ENCODE measurements at regions of chr19 and their contacts with region 1.

Region 1: GRCh38 chr19:5622463-5623396 is at the starts of genes SAFB and SAFB2:
- DNase-seq: peak; percentile 97 to 100
- H3K4me3 ChIP-seq: peak within 1 kb of the TSS; percentile 86 to 96
- H3K27ac ChIP-seq: peak within 1 kb of the TSS; percentile 93 to 97
- H3K4me1 ChIP-seq: peaks cover 3 to 49% of the 10 kb centered on the region in 2 donors
- H3K27me3 ChIP-seq: no peaks in the 10 kb centered on the region
- CTCF ChIP-seq: peak in 2 of 3 experiments; percentile 6 to 9
- total RNA-seq, gene SAFB: 114 TPM
- total RNA-seq, gene SAFB2: 10.7 TPM

Region 2: DNA sequence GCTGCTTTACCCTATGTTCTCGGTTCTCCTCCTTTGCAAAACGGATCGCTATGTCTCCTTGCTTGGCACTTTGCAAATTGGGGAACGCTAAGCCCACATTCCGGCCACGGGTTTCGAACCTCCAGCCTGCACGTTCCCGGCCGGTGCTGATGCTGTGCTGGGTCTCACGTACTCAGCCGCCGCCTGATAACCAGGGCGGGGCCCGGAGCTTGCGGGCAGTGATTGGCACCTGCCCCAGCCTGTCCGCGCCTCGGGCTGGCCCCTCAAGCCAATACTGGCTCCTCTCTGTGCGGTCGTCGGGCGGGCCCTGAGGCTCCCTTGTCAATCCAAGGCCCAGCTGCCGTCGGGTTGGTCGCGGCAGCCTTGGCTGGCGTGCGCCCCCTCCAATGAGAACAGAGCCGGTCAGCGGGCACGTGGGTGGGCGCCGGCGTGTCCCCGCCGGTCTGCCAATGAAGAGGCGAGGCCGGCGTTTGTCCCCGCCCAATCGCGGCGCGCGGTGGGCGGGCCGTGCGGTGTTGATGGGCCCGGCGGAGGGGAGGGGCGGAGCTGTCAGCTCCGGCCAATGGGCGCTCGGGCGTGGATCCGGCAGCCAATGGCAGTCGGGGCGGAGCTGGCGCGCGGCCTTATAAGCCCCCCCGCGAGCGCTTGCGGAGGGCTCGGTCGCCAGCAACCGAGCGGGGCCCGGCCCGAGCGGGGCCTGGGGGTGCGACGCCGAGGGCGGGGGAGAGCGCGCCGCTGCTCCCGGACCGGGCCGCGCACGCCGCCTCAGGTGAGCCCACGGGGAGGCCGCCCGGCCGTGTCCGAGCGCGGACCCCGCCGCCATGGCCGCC is 654.1 kb before region 1 on chr19 and contains the start of gene KDM4B:
- intact Hi-C with region 1: loop called (anchors 5 kb)
- DNase-seq: peak; percentile 99 to 100
- H3K4me3 ChIP-seq: peak within 1 kb of the TSS; percentile 62 to 90
- H3K27ac ChIP-seq: peak within 1 kb of the TSS; percentile 24 to 40
- H3K4me1 ChIP-seq: peaks cover 9 to 18% of the 10 kb centered on the region in 2 donors
- H3K27me3 ChIP-seq: no peaks in the 10 kb centered on the region
- CTCF ChIP-seq: no peak
- total RNA-seq, gene KDM4B: 46.0 TPM

Region 3: DNA sequence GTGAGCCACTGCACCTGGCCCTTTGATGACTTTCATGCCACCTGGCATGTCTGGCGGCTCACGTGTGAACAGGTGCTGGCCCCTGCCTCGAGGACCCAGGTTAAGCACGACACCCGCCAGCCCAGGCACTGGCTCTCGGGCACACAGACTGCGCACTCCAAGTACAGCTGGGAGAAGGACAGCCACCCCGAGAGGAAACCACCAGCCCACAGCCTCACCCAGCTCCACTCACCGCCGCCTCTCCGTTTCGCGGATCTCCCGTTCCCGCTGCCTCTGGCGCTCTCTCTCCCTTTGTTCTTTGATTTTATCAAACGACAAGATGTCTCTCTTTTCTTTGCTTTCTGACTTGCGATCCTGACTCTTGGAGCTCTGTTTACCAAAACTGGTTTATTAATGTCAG is 27.6 kb before region 1 on chr19:
- intact Hi-C with region 1: no loop called
- DNase-seq: no peak
- H3K4me3 ChIP-seq: no peak overlapping the region
- H3K27ac ChIP-seq: no peak overlapping the region
- H3K4me1 ChIP-seq: no peaks in the 10 kb centered on the region
- H3K27me3 ChIP-seq: no peaks in the 10 kb centered on the region
- CTCF ChIP-seq: no peak

Region 4: GRCh38 chr19:5642204-5642603 is 19.5 kb after region 1 on chr19:
- intact Hi-C with region 1: no loop called
- DNase-seq: no peak
- H3K4me3 ChIP-seq: no peak overlapping the region
- H3K27ac ChIP-seq: no peak overlapping the region
- H3K4me1 ChIP-seq: no peaks in the 10 kb centered on the region
- H3K27me3 ChIP-seq: no peaks in the 10 kb centered on the region
- CTCF ChIP-seq: no peak

Region 5: DNA sequence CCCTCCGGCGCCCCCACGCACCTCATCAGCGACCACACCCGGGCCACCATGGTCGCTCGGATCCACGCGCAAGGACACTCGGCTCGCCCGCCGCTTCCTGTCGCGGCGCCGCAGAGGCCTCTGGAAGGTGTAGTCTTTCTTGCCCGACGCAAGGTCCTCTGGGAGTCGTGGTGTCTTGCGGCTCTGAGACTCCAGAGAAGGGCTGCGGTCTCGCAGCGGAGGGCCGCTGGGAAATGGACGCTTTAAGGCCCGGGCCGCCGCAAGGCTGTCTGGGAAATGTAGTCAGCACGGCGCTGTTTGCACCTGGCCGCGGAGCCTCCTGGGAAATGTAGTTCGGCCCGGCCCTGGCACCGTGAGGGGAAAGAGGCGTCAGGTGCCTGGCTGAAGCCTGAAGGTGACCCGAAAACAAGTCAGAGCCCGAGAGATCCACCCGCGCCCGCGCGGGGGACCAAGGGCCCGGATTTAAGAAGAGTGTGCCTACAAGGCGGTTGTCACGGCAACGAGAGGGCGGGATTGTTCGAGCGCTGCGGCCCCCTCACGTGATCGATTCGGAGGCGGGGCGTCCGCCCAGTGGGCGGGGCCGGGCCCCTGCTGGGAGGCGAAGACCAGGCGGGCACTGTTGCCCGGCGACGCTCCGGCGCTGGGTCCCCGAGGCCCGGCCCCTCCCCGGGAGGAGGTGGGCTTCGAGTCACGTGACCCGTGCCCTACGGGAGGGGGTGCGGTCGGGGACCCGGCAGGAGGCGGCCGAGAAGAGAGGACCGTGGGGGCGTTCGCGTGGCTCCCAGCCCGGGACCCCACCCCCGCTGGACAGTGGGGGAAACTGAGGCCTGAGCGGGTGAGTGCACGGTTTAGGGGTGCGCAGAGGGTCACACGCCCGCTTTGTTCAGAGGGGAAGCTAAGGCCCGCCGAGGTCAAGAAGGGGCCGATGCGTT is 58.0 kb after region 1 on chr19 and contains the starts of genes HSD11B1L and MICOS13:
- intact Hi-C with region 1: loop called (anchors 1 kb)
- DNase-seq: peak; percentile 97 to 99
- H3K4me3 ChIP-seq: peak within 1 kb of the TSS; percentile 77 to 96
- H3K27ac ChIP-seq: peak within 1 kb of the TSS; percentile 80 to 95
- H3K4me1 ChIP-seq: peaks cover 6 to 9% of the 10 kb centered on the region in 2 donors
- H3K27me3 ChIP-seq: no peaks in the 10 kb centered on the region
- CTCF ChIP-seq: no peak
- total RNA-seq, gene HSD11B1L: 116 TPM
- total RNA-seq, gene MICOS13: 75.6 TPM

Region 6: DNA sequence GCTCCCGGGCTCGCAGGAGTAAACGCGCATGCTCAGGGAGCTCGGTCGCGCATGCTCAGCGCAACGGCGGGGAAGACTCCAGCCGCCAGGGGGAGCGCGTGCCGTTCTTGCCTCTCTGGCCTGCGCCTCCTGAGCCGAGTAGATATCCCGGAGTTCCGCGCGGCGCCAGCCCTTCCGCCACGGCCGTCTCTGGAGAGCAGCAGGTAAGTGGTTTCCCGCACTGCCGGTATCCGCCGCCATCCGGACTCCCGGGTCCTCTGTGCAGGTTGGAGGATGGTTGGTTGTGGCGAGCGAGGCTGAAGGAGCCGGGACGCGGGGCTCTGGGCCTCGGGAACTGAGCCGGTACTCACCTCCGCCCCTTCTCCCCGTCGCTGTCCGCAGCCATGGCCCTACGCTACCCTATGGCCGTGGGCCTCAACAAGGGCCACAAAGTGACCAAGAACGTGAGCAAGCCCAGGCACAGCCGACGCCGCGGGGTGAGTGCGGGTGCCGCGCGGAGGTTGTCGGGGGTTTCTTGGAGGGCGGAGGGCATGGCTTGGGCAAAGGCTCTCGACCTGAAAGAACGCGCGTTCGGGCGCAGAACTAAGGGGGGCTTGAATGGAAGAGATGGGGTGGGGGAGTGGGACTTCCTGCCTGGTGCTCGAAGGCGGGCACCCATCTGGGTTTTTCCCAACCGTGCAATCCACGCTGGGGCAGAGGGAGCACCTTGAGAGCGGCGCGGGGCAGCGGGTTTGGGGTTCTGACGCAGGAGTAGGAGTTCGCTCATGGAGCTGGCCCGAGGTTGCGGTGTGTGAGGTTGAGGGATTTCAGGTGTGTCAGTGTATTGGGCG is 67.6 kb after region 1 on chr19 and contains the start of gene RPL36:
- intact Hi-C with region 1: loop called (anchors 2 kb)
- DNase-seq: peak; percentile 84 to 99
- H3K4me3 ChIP-seq: peak within 1 kb of the TSS; percentile 65 to 70
- H3K27ac ChIP-seq: peak within 1 kb of the TSS; percentile 85 to 88
- H3K4me1 ChIP-seq: peaks cover 5 to 13% of the 10 kb centered on the region in 2 donors
- H3K27me3 ChIP-seq: no peaks in the 10 kb centered on the region
- CTCF ChIP-seq: peak; percentile 94 to 98 (median 95)
- total RNA-seq, gene RPL36: 885 TPM

Region 7: DNA sequence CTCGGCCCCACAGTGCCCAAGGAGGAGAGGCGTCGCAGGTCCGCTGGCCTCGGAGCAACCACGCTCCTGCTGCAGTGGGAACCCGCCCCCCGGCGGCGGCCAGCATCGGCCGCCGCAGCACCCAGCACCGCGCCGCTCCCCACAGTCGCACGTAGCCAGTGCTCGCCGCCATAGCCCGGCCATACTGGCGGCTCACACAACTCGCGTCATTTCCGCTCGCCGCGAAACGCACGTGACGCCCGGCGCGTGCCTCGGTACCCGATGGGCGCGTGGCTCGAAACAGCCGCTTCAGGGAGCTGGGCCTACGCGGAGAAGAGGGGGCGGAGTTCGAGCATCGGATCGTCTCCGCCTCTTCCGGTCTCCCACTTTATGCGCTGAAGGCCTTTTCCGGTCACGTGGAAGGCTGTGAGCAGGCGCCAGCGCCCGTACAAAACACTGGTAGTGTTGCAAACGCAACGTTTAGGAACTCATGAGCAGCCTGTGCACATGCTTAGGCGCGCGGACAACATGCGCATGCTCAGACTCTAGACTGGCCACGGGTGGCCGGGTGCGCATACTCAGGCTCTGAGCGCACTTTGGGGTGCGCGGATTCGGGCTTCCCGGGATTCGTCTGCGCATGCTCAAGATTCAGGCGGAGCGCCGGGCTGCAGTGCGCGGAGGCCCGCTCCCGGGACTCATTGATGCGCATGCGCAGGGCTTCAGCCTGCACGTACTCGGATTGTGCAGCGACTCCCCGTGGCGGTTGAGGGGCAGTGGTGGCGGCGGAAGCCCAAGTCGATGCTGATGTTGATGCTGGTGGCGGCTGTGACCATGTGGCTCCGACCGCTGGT is 97.4 kb after region 1 on chr19 and contains the starts of genes CATSPERD and LONP1:
- intact Hi-C with region 1: loop called (anchors 1 kb)
- DNase-seq: peak; percentile 89 to 99
- H3K4me3 ChIP-seq: peak within 1 kb of the TSS; percentile 68 to 99
- H3K27ac ChIP-seq: peak within 1 kb of the TSS; percentile 91 to 98
- H3K4me1 ChIP-seq: peaks cover 5 to 13% of the 10 kb centered on the region in 2 donors
- H3K27me3 ChIP-seq: no peaks in the 10 kb centered on the region
- CTCF ChIP-seq: peak; percentile 90 to 94 (median 93)
- total RNA-seq, gene CATSPERD: not detected
- total RNA-seq, gene LONP1: 60.0 TPM

Region 8: GRCh38 chr19:5790573-5791520 is 168.1 kb after region 1 on chr19 and contains the start of gene DUS3L:
- intact Hi-C with region 1: loop called (anchors 5 kb)
- DNase-seq: peak; percentile 89 to 99
- H3K4me3 ChIP-seq: peak within 1 kb of the TSS; percentile 63 to 77
- H3K27ac ChIP-seq: peak within 1 kb of the TSS; percentile 86 to 97
- H3K4me1 ChIP-seq: peaks cover 3 to 5% of the 10 kb centered on the region in 2 donors
- H3K27me3 ChIP-seq: no peaks in the 10 kb centered on the region
- CTCF ChIP-seq: no peak
- total RNA-seq, gene DUS3L: 13.1 TPM

Measured in ascending aorta (tissue), 2 donors.